Activated T-helper 2 cell treated with anti-CD3 and anti-CD28 coated beads, Interferon-gamma antibody, Interleukin-2, Interleukin-4, amounts not matched to agents 10 μg/mL and 5 μg/mL and 100 μg/mL, durations not matched to agents 14 hours and 24 hours and 36 hours (primary cell): ENCODE measurements at regions of chr5 and their contacts with region 1.

Region 1: GRCh38 chr5:144191998-144192397 is 21.3 kb downstream of the KCTD16 start:
- DNase-seq: peak; percentile 40
- H3K4me3 Mint-ChIP-seq: no peak overlapping the region
- H3K27ac Mint-ChIP-seq: no peak overlapping the region
- H3K4me1 Mint-ChIP-seq: peaks cover 27% of the 10 kb centered on the region
- H3K27me3 Mint-ChIP-seq: peaks cover 7% of the 10 kb centered on the region

Region 2: GRCh38 chr5:142922223-142922952 is 1269.6 kb before region 1 on chr5:
- intact Hi-C with region 1: loop called (anchors 10 kb)
- DNase-seq: no peak
- H3K4me3 Mint-ChIP-seq: no peak overlapping the region
- H3K27ac Mint-ChIP-seq: no peak overlapping the region
- H3K4me1 Mint-ChIP-seq: peaks cover 33% of the 10 kb centered on the region
- H3K27me3 Mint-ChIP-seq: no peaks in the 10 kb centered on the region

Region 3: DNA sequence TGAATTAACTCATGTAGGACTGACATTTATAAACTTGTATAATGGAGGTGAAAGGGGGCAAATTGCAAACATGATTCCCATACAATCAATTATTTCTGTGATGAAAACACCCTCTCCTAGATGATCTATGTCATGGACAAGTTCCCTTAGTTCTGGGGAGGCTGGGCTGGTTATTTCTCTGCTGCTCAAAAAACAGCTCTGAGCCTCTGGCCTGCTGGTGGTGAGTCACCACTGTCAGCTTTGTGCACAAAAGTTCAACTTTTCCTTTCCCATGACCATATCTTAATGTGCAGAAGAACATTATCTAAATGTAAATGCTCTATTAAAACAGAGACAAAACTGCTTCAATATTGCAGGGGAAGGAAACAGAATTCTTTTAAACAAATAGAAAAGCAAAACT is 295.0 kb before region 1 on chr5:
- intact Hi-C with region 1: loop called (anchors 5 kb)
- DNase-seq: no peak
- H3K4me3 Mint-ChIP-seq: no peak overlapping the region
- H3K27ac Mint-ChIP-seq: peak overlapping the region; percentile 66
- H3K4me1 Mint-ChIP-seq: peaks cover 28% of the 10 kb centered on the region
- H3K27me3 Mint-ChIP-seq: peaks cover 1% of the 10 kb centered on the region

Region 4: DNA sequence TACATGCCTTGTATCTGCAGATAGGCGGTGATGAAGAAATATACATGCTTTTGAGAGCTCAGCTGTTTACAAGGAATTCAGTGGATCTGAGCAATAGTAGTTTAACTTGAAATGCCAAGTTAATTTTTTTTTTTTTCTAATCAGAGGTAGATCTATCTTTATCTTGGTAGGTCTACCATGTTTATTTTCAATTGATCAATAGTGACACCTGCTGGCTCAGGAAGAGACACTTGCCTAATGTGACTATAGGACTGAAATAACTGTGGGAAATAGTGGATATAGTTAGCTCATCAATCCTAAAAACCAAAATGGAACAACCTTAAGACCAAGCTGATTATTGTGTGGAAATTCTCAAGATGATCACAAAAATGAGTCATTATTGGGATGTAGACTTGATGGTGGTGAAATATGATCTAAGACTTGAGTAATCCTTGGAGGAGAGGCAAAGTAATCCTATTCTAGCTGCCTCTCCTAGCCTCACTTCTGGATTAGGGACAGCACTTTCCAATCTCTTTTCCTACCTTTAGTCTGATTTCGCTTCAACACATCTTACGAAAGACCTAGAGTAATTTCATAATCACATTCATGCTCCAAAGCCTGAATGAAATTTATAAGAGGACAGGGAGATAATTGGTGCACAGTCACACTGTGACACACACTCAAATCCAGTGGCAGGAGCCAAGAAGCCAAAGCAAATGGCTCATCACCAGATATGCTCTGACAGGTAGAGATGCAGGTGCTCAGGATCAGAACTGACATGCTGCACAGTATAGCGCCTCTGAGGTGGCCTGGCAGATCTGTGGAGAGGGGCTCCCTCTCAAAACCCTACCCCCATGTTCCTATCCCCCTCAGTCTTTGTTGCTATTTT is 223.8 kb before region 1 on chr5:
- intact Hi-C with region 1: loop called (anchors 5 kb)
- DNase-seq: no peak
- H3K4me3 Mint-ChIP-seq: no peak overlapping the region
- H3K27ac Mint-ChIP-seq: no peak overlapping the region
- H3K4me1 Mint-ChIP-seq: peaks cover 2% of the 10 kb centered on the region
- H3K27me3 Mint-ChIP-seq: peaks cover 30% of the 10 kb centered on the region

Region 5: GRCh38 chr5:144170276-144171024 is 21.5 kb before region 1 on chr5 and contains the starts of genes KCTD16 and YIPF5:
- intact Hi-C with region 1: loop called (anchors 1 kb)
- DNase-seq: peak; percentile 96
- H3K4me3 Mint-ChIP-seq: peak within 1 kb of the TSS; percentile 99
- H3K27ac Mint-ChIP-seq: peak within 1 kb of the TSS; percentile 93
- H3K4me1 Mint-ChIP-seq: peaks cover 34% of the 10 kb centered on the region
- H3K27me3 Mint-ChIP-seq: peaks cover 12% of the 10 kb centered on the region
- total RNA-seq, gene KCTD16: not detected in 2 replicates
- total RNA-seq, gene YIPF5: 34.0 and 34.2 TPM in 2 replicates

Region 6: DNA sequence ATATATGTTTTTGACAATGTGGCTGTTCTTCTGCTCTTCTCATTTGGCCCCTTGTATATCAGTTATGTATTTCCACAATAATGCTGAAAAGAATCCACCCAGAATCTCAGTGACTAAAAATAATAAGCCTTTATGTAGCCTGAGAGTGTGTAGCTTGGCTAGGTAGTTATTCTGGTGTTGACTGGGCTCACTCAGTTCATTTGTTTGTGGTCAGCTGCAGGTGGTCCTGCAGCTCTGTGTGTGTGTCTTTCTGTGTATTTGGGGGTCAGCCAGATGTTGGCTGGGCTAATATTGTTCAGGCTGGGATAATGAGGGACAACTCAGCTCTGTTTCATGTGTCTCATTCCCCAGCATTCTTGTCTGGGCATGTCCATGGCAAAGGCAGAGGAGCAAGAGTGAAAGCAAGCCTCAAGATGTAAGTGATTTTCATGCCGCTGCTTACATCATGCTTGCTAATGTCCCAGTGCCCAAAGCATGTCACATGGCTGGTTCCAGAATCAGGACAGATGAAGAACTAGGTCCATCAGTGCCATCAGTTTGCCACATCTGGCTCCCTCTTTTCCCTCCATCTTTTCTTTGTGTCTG is 141.4 kb after region 1 on chr5:
- intact Hi-C with region 1: no loop called
- DNase-seq: no peak
- H3K4me3 Mint-ChIP-seq: no peak overlapping the region
- H3K27ac Mint-ChIP-seq: no peak overlapping the region
- H3K4me1 Mint-ChIP-seq: no peaks in the 10 kb centered on the region
- H3K27me3 Mint-ChIP-seq: no peaks in the 10 kb centered on the region

Region 7: DNA sequence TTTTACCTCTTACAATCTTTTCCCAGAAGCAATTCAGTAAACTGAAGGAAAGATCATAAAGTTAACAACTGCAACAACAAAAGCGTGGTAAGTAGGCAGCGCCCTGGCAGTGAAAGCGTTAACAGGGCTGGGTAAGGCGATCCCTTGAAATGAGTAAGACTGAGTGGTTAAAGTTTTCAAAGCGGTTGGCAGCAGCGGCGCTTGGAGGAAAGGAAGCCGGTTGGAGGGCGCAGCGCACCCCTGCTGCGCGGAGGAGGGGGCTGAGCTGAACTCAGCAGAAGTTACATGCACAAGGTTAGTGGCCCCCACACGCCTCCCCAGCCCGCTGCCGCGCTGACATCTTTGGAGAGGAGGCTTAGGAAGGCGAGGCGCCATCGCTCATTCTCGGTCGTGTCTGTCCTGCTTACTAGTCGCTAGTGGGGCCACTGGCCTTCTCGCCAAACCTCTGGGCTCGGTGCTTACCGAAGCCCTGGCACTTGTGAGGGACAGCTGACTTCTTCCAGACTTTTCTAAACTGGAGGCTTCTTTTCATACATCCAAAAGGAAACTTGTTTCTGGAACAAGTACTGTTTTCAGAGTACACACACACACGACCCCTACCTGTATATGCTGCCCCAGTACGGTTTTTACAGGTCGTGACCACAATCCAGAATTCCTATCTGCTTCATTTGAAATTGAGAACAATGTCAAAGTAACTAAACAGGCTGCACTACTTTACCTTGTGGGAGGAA is 1744.6 kb after region 1 on chr5 and contains the start of gene SH3RF2:
- intact Hi-C with region 1: loop called (anchors 5 kb)
- DNase-seq: peak; percentile 42
- H3K4me3 Mint-ChIP-seq: peak within 1 kb of the TSS; percentile 80
- H3K27ac Mint-ChIP-seq: peak within 1 kb of the TSS; percentile 83
- H3K4me1 Mint-ChIP-seq: peaks cover 56% of the 10 kb centered on the region
- H3K27me3 Mint-ChIP-seq: peaks cover 26% of the 10 kb centered on the region
- total RNA-seq, gene SH3RF2: 0.21 and 0.57 TPM in 2 replicates

Region 8: GRCh38 chr5:145946112-145946861 is 1754.3 kb after region 1 on chr5:
- intact Hi-C with region 1: loop called (anchors 5 kb)
- DNase-seq: no peak
- H3K4me3 Mint-ChIP-seq: peak overlapping the region; percentile 14
- H3K27ac Mint-ChIP-seq: peak overlapping the region; percentile 66
- H3K4me1 Mint-ChIP-seq: peaks cover 48% of the 10 kb centered on the region
- H3K27me3 Mint-ChIP-seq: peaks cover 21% of the 10 kb centered on the region